Heart left ventricle (tissue), 16 donors: ENCODE measurements at regions of chr1 and their contacts with region 1.

Region 1: GRCh38 chr1:61049850-61050540 is 32.4 kb upstream of the NFIA start:
- DNase-seq: peak; percentile 92 to 96 (median 94)
- ATAC-seq: peak; percentile 79 to 88 (median 85)
- H3K4me3 ChIP-seq: peak overlapping the region; percentile 60 to 95 (median 84)
- H3K27ac ChIP-seq: peak overlapping the region; percentile 89 to 99 (median 98)
- H3K4me1 ChIP-seq: peaks cover 0 to 44% (median 32%) of the 10 kb centered on the region in 12 donors
- H3K27me3 ChIP-seq: peaks cover 0 to 10% (median 0%) of the 10 kb centered on the region in 9 donors
- CTCF ChIP-seq: peak; percentile 94 to 99 (median 98)
- POLR2A ChIP-seq: no peak

Region 2: GRCh38 chr1:60848583-60849188 is 201.3 kb before region 1 on chr1:
- intact Hi-C with region 1: loop called in 1 of 10 experiments (anchors 10 kb)
- DNase-seq: no peak
- ATAC-seq: no peak
- H3K4me3 ChIP-seq: no peak overlapping the region
- H3K27ac ChIP-seq: no peak overlapping the region
- H3K4me1 ChIP-seq: peaks cover 0 to under 1% (median 0%) of the 10 kb centered on the region in 12 donors
- H3K27me3 ChIP-seq: no peaks in the 10 kb centered on the region
- CTCF ChIP-seq: peak; percentile 29 to 62 (median 52)
- POLR2A ChIP-seq: no peak

Region 3: DNA sequence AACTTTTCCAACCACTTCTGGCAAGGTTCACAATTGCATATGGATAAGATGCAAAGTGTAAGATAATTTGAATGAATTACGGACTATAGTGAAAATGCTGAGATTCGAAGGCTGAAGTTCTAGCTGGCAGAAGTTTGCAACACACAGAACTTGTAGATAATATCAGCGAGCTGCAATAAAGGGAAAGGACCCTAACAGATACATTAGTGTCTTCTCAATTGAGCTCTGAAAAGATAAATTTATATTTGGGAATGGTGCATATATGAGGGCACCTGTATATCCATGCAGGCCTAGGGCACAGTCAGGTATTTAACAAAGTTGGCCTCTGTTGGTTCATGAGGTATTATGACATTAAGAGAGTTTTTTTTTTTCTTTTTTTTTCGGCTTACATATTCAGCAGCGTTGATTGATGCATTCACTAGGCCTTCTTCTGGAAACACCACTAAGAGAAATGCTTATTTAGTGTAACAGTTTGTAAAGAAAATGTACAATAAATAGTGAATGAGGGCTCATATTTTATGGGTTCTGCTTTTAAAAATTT is 34.6 kb after region 1 on chr1:
- intact Hi-C with region 1: loop called in 6 of 10 experiments (anchors 2 to 5 kb)
- DNase-seq: no peak
- ATAC-seq: no peak
- H3K4me3 ChIP-seq: peak overlapping the region; percentile 68 to 95 (median 86)
- H3K27ac ChIP-seq: peak overlapping the region; percentile 94 to 99 (median 96)
- H3K4me1 ChIP-seq: peaks cover 5 to 66% (median 43%) of the 10 kb centered on the region in 12 donors
- H3K27me3 ChIP-seq: no peaks in the 10 kb centered on the region
- CTCF ChIP-seq: no peak
- POLR2A ChIP-seq: no peak

Region 4: DNA sequence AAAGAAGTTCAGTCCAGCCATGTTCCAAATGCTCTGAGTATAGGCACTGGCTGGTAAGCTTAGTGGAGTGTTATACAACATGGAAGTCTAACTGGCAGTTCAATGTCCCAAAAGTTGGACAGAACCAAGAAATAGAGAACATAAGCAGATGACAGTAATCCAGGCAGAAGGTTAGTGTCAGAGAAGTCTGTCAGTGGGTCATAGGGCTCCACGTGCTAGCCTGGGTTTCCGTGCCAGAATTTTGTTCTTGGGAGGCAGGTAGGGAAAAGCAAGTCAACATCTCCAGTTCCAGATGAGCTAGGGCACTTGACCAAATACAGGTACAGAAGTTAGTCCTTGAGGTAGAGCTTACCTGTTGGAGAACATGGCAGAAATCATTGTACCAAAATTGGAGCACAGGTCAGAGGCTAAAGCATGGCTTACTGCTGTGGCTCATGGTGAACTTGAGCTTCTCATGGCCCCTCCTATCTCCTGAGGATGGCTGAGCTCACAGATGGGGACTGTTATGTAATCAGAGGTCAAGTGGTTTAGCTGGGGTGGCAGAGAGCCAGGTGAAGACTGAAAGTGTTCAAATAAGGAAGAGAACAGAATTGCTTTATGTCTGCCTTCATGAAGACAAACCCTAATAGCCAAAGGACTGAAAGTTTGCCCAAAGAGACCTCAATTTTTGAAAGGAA is 203.2 kb after region 1 on chr1:
- intact Hi-C with region 1: loop called in 4 of 10 experiments (anchors 5 to 10 kb)
- DNase-seq: peak in 4 of 5 donors; percentile 76 to 88 (median 80)
- ATAC-seq: peak; percentile 53 to 84 (median 76)
- H3K4me3 ChIP-seq: no peak overlapping the region
- H3K27ac ChIP-seq: peak overlapping the region in 11 of 12 donors; percentile 35 to 80 (median 74)
- H3K4me1 ChIP-seq: peaks cover 6 to 78% (median 42%) of the 10 kb centered on the region in 12 donors
- H3K27me3 ChIP-seq: no peaks in the 10 kb centered on the region
- CTCF ChIP-seq: no peak
- POLR2A ChIP-seq: no peak

Region 5: DNA sequence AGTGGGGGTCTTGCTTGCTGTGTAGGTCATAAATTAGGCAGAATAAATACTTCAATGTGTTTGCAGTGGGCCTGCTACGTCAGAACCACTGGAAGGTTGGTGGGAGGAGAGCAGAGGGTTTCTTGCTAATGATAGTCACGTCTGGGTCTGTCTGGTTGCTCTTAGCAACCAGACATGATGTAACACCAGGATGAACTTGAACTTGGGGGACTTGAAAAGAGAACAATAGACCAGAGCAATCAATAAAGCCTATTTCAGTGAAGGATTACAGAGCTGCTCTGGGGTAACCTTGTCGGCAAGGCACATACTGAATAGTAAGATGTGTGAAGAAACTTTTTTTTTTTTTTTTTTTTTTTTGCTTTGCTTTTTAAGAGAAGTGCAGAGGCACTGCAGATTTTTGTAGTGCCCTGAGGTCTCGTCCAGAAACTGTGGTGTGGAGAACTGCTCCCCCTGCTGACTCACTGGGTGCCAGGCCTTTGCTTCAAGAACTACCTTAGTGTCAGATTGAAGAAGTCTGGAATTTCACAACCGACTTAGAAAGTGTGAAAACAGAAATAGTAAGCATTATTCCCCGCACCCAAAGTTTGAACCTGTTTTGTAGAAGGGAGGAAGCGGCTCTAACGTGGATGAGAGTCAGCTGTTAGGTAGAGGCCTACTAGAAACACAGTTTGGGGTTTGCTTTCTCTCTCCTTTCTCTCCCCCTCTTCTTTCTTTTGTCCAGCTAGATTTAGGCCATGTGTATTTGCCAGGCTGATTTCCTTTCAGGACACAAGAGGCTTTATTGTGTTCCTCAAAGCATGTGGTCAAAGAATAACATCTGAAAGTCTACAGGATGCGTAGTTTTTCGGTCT is 403.3 kb after region 1 on chr1:
- intact Hi-C with region 1: loop called in 9 of 10 experiments (anchors 1 to 5 kb)
- DNase-seq: peak; percentile 86 to 90 (median 88)
- ATAC-seq: peak; percentile 69 to 84 (median 81)
- H3K4me3 ChIP-seq: no peak overlapping the region
- H3K27ac ChIP-seq: peak overlapping the region; percentile 64 to 90 (median 78)
- H3K4me1 ChIP-seq: peaks cover 17 to 65% (median 61%) of the 10 kb centered on the region in 12 donors
- H3K27me3 ChIP-seq: no peaks in the 10 kb centered on the region
- CTCF ChIP-seq: peak; percentile 75 to 90 (median 80)
- POLR2A ChIP-seq: no peak

Region 6: DNA sequence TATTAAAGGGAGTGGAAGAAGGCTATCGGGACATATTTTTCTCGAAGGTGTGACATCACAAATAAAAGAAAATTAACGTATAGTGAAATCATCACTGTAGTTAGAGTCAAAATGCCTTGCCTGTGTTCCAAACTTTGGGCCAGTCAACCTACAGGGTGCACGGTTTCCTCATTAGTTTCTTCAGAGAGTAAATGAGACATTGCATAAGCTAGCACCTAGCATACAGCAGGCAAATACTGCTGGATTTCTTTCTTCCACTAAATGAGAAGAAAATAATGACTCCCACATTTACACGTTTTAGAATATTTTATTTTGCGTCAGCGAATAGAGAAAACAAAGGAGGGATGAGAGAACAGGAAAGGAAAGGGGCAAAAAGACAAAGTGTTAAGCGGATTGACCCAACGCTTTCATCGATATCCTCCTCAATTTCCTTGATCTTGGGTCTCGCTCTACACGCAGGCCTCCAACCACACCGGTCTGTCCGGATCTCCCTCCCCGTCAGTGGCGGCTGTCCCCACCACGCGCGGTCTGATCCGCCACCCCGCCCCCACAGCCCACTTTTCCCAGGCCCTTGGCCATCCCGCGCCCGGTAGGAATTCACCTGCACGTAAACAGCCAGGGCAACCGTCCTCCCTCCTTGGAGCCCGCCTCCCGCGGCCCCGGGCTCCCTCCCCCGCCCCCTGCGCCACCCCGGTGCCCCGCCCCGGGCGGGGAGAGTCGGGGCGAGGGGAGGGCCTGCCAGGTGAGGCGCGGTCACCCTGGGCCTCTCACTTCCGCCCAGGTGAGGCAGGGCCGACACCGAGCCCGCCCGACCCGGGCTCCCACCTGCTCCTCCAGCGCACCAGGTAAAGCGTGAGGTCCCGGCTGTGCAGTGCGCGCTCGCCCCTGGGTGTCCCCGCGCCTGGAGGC is 692.0 kb after region 1 on chr1 and contains the start of gene PATJ:
- intact Hi-C with region 1: loop called in 1 of 10 experiments (anchors 10 kb)
- DNase-seq: peak; percentile 57 to 72 (median 64)
- ATAC-seq: peak; percentile 40 to 85 (median 78)
- H3K4me3 ChIP-seq: peak within 1 kb of the TSS; percentile 56 to 100 (median 96)
- H3K27ac ChIP-seq: peak within 1 kb of the TSS; percentile 89 to 99 (median 96)
- H3K4me1 ChIP-seq: peaks cover 0 to 26% (median 10%) of the 10 kb centered on the region in 12 donors
- H3K27me3 ChIP-seq: no peaks in the 10 kb centered on the region
- CTCF ChIP-seq: no peak
- POLR2A ChIP-seq: no peak
- total RNA-seq, gene PATJ: 71.1 to 190 (median 114) TPM